Activated CD4-positive, alpha-beta memory T cell treated with anti-CD3 and anti-CD28 coated beads for 36 hours (primary cell): ENCODE measurements at regions of chr1 and their contacts with region 1.

Region 1: DNA sequence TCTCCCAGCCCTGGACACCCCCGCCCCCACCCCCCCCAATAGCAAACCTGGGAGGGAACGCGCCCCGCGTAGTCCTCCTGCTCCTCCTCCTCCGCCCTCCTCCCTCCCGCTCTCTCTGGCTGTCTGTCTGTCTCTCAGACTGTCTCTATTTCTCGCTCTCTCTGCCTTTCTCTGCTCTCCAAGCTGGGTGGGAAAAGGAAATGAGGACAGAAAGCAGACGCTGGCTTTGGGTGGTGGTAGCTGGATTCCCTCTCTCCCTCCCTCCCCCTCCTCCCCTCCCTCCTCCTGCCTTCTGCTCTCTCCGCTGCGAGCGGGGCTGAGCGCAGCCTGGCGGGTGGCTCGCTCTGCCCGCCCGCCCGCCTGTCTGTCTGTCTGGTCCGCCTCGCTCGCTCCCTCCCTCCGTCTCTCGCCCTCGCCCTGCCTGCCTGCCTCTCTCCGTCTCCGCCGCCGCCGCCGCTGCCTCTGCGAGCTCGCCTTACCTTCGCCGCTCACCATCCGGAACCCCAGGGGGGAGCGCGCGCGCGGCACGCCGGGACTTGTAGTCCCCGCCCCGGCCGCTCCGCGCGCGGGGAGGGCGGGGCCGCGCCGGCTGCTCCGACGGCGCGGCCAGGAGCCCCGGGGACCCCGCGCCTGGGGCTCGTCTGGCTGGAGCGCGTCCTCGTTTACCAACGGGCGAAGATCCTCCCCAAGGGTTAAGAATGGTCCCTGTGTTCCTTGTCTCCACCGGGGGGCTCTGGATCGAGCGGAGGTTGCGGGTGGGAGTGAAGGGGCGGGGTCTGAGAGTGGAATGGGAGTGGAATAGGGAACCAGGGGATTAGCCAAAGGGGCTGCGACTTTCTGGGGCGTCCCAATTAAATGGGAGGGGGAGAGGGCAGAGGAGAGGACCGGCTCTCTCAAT is at the start of gene AHDC1:
- DNase-seq: peak; percentile 93
- H3K4me3 Mint-ChIP-seq: peak within 1 kb of the TSS; percentile 82
- H3K27ac Mint-ChIP-seq: peak within 1 kb of the TSS; percentile 44
- H3K4me1 Mint-ChIP-seq: peaks cover 39% of the 10 kb centered on the region
- H3K27me3 Mint-ChIP-seq: no peaks in the 10 kb centered on the region
- total RNA-seq, gene AHDC1: 8.3 to 12.1 TPM

Region 2: DNA sequence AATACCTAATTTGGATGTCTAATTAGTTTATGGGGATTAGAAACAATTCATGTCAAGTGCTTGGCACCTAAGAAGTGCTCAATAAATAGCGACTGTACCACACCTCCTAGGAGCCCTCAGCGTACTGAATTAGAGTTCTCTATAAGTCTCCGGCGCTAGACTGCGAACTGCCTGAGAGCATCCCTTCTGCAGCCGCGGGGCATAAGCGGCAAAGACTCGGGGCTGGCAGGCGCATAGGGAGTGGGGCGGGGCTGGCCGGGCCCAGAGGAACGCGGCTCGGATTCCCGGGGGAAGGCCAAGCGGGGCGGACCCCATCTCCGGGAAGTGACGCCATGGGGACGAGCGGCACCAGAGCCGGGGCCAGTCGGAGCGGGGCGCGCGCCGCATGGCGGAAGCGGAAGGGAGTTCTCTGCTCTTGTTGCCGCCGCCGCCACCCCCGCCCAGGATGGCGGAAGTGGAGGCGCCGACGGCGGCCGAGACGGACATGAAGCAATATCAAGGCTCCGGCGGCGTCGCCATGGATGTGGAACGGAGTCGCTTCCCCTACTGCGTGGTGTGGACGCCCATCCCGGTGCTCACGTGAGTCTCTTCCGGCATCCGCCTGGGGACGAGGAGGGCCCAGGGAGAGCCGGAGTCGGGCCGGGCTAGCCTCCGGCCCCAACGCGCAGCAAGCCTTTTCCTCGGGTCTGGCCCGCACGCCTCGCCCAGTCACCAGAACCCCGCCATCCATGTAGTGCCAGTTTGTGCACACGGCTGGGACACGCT is 281.9 kb before region 1 on chr1 and contains the start of gene TMEM222:
- CTCF ChIA-PET with region 1: no interaction called
- POLR2A ChIA-PET with region 1: no interaction called
- intact Hi-C with region 1: loop called (anchors 10 kb)
- DNase-seq: peak; percentile 98
- H3K4me3 Mint-ChIP-seq: peak within 1 kb of the TSS; percentile 96
- H3K27ac Mint-ChIP-seq: peak within 1 kb of the TSS; percentile 82
- H3K4me1 Mint-ChIP-seq: peaks cover 41% of the 10 kb centered on the region
- H3K27me3 Mint-ChIP-seq: no peaks in the 10 kb centered on the region
- total RNA-seq, gene TMEM222: 22.8 to 24.6 TPM

Region 3: GRCh38 chr1:27392096-27392777 is 211.7 kb before region 1 on chr1 and contains the start of gene GPR3:
- CTCF ChIA-PET with region 1: interaction called, 49 read pairs
- POLR2A ChIA-PET with region 1: no interaction called
- intact Hi-C with region 1: loop called (anchors 2 kb)
- DNase-seq: peak; percentile 96
- H3K4me3 Mint-ChIP-seq: peak within 1 kb of the TSS; percentile 78
- H3K27ac Mint-ChIP-seq: peak within 1 kb of the TSS; percentile 63
- H3K4me1 Mint-ChIP-seq: peaks cover 13% of the 10 kb centered on the region
- H3K27me3 Mint-ChIP-seq: no peaks in the 10 kb centered on the region
- total RNA-seq, gene GPR3: 1.3 to 1.5 TPM

Region 4: DNA sequence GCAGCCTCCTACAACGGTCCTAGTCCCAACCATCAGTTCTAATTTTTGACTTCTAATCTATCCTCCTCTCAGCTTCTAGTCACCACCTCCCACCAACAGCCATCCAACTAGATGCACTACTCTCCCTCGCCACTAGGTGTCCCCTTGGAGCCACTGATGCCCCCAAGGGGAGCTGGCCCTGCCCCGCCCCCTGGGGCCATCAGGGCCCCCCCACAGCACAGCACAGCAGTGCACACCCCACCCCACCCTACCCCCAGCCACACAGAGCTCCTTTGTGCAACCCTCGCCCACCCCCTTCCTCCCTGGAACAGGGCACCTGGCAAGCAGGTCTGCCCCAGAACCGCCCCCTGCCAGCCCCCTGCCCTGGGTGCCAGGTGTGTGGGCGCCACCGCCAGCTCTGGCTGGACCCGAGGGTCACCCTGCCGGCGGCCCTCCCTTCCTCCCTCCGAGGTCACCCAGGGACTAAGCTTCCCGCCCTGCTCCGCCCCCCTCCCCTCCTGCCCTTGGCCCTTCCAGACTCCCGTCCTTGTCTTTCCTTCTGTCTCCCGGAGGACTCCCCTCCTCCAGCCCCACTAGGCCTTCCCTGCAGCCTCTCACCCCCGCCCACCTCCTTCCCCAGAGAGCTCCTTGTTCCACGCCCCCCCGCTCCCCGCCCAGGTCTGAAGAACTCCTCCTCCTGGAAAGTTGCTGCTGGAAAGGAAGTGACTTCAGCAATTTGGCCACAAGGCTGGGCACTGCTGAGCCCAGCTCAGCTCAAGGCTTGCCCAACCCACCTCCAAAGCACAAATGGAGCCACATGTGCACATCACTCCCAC is 46.9 kb before region 1 on chr1:
- CTCF ChIA-PET with region 1: interaction called, 120 read pairs
- POLR2A ChIA-PET with region 1: interaction called, 6 read pairs
- intact Hi-C with region 1: loop called (anchors 1 kb)
- DNase-seq: peak; percentile 81
- H3K4me3 Mint-ChIP-seq: no peak overlapping the region
- H3K27ac Mint-ChIP-seq: peak overlapping the region; percentile 49
- H3K4me1 Mint-ChIP-seq: peaks cover 17% of the 10 kb centered on the region
- H3K27me3 Mint-ChIP-seq: no peaks in the 10 kb centered on the region

Region 5: DNA sequence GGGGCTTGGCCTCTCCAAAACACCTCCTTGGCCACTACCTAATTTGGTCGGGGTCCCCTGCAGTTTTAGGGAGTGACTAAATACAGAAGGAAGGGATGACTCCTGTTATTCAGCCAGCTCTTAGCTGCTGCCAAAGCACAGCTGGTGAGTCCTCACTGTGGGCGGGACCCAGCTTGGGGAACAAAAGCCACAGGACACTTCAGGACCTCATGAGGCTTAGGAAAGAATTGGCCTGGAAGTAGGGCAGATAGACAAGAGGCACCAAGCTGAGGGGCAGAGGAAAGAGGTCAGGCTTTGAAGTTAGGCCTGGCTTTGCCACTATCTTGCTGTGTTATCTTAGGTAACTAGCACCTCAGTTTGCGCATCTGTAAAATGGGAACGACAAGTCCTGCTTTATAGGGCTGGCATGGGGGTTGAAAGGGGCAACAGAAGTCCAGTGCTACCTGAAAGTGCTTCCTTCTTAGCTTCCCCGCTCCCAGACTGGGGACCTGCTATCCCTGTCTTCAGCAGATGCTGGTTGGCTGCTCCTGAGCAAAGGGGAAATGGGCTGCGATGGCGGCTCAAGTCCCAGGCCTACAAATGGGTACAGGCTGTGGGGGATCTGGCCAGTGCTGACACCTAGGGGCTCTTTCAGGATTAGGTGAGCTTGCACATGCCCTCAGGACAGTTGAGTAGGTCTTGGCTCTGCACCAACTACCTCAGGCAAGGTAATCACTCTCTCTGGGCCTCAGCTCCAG is 52.4 kb after region 1 on chr1:
- CTCF ChIA-PET with region 1: interaction called, 312 read pairs
- POLR2A ChIA-PET with region 1: no interaction called
- intact Hi-C with region 1: no loop called
- DNase-seq: peak; percentile 41
- H3K4me3 Mint-ChIP-seq: no peak overlapping the region
- H3K27ac Mint-ChIP-seq: no peak overlapping the region
- H3K4me1 Mint-ChIP-seq: peaks cover 29% of the 10 kb centered on the region
- H3K27me3 Mint-ChIP-seq: no peaks in the 10 kb centered on the region